ENCODE measurements at regions of chr10 and their contacts with region 1.

Region 1: GRCh38 chr10:100496567-100496966 is 23.1 kb downstream of the SEC31B start:
- DNase-seq: no peak
- H3K4me3 ChIP-seq: no peak overlapping the region
- H3K27ac ChIP-seq: no peak overlapping the region
- H3K4me1 ChIP-seq: no peaks in the 10 kb centered on the region
- H3K27me3 ChIP-seq: no peaks in the 10 kb centered on the region
- CTCF ChIP-seq: no peak

Region 2: GRCh38 chr10:100551196-100551595 is 54.6 kb after region 1 on chr10:
- CTCF ChIA-PET with region 1: no interaction called
- dilution Hi-C with region 1: loop called (anchors 10 kb)
- in situ Hi-C with region 1: no loop called
- intact Hi-C with region 1: no loop called
- DNase-seq: no peak
- H3K4me3 ChIP-seq: no peak overlapping the region
- H3K27ac ChIP-seq: no peak overlapping the region
- H3K4me1 ChIP-seq: no peaks in the 10 kb centered on the region
- H3K27me3 ChIP-seq: no peaks in the 10 kb centered on the region
- CTCF ChIP-seq: no peak